HEK293T (cell line): ENCODE measurements at regions of chr6 and their contacts with region 1.

Region 1: GRCh38 chr6:71124340-71124739 is 164.3 kb upstream of the OGFRL1 start:
- DNase-seq: no peak

Region 2: DNA sequence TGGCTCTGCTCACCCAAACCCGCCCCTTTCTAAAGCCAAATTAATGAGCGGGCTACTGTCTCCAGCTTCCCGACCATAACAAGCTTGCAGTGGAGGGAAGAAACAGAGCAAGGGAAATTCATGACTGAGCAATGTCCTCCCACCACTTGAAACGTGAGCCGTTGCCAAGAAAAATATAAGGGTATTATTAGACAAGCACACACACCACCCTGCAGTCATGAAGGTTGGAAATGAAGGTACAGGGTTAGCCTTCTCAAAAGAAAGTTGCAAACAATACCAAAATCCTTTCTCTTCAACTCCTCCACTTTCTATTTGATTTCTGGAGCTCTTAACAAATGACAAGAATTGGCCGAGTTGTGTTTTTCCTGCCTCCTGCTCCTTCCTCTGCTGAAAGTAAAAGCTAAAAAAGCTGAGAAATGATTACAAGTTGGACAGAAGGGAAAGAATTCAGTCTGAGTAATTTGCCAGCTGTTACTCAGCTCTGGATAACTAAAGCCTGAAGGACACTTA is 16.4 kb before region 1 on chr6:
- CTCF ChIA-PET with region 1: interaction called, 11 read pairs
- POLR2A ChIA-PET with region 1: no interaction called
- DNase-seq: peak; percentile 48

Region 3: GRCh38 chr6:71168233-71168765 is 44.0 kb after region 1 on chr6:
- CTCF ChIA-PET with region 1: no interaction called
- POLR2A ChIA-PET with region 1: no interaction called
- DNase-seq: no peak